A549 (cell line): ENCODE measurements at regions of chr6 and their contacts with region 1.

Region 1: DNA sequence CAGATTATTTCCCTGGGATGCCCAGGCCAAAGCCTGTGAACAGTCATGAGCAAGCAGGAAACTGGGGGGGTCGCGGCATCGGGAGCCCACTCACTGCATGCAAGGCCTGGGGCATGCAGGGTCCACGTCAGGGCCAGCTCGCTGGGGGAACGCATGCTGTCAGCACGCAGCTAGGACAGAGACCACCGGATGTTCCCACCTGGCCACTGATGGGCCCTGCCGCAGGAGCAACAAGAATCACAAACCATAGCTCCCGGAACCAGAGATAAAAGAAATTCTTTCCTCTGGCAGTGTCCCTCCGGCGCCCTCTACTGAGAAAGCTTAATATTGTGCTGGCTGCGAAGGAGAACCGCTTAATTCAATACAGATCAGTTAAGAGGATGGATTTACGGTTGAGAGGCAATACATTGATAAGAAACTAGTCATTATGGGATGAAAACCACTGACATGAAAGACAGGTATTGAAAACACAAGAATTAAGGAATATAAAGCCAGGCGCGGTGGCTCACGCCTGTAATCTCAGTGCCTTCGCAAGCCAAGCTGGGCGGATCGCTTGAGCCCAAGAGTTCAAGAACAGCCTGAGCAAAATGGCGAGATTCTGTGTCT is 32.6 kb downstream of the C6orf15 start:
- DNase-seq: peak; percentile 53 to 55
- ATAC-seq: peak; percentile 81 to 91
- H3K4me3 ChIP-seq: no peak overlapping the region
- H3K27ac ChIP-seq: peak overlapping the region in 1 of 2 experiments; percentile 84; a peak in 3 of 6 replicates
- H3K4me1 ChIP-seq: no peaks in the 10 kb centered on the region
- CTCF ChIP-seq: peak; percentile 72
- EP300 ChIP-seq: no peak
- POLR2A ChIP-seq: no peak
- RAD21 ChIP-seq: peak; percentile 70 to 71

Region 2: GRCh38 chr6:30942338-30943060 is 137.3 kb before region 1 on chr6:
- CTCF ChIA-PET with region 1: interaction called, 13 read pairs
- POLR2A ChIA-PET with region 1: no interaction called
- DNase-seq: peak; percentile 85 to 87
- ATAC-seq: peak; percentile 95 to 97
- H3K4me3 ChIP-seq: peak overlapping the region; percentile 12; the same call in 1 of the 3 replicates
- H3K27ac ChIP-seq: peak overlapping the region; percentile 80 to 84
- H3K4me1 ChIP-seq: peaks cover 14% of the 10 kb centered on the region
- CTCF ChIP-seq: peak; percentile 41
- EP300 ChIP-seq: no peak
- POLR2A ChIP-seq: no peak
- RAD21 ChIP-seq: peak; percentile 56; a peak in 4 of 5 replicates

Region 3: DNA sequence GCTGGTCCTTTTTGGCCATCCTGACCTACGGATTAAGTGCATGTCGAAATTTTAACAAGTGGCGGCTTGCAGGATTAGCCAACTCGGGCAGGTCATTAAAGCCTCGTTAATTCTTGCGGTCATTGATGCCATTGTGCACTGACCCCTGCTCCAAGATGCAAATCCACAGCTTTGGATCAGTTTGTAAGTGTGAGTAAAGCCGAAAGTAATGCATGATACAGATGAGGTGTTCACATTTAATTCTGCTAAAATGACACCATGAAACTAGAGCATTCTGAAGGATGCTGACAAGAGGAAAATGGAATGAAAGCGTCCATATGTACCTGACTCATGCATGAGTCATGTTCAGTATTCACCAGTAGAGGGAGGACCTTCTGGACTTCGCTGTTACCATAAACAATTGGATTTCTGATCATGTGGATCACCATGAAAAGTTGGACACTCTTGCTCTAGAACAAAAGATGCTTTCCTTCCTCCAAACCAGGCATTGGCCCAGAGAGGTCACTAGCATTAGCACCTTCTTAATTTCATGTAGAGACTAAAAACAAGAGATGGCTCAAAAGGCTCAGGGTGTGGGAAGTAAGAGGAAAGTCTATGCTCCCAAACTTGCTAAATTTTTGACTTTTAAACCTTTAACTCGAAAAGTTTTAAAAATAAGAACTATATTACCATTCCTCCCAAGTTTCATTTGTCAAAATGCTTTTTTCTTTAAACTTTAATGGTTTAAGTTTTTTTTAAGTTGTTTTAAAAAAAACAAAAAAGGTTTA is 21.4 kb before region 1 on chr6:
- CTCF ChIA-PET with region 1: interaction called, 14 read pairs
- POLR2A ChIA-PET with region 1: no interaction called
- DNase-seq: peak; percentile 68 to 74
- ATAC-seq: peak; percentile 93
- H3K4me3 ChIP-seq: no peak overlapping the region
- H3K27ac ChIP-seq: peak overlapping the region in 1 of 2 experiments; percentile 49; a peak in 2 of 6 replicates
- H3K4me1 ChIP-seq: peaks cover 15% of the 10 kb centered on the region
- CTCF ChIP-seq: peak; percentile 37
- EP300 ChIP-seq: no peak
- POLR2A ChIP-seq: no peak
- RAD21 ChIP-seq: no peak

Region 4: GRCh38 chr6:31094389-31094881 is 14.7 kb after region 1 on chr6:
- CTCF ChIA-PET with region 1: interaction called, 19 read pairs
- POLR2A ChIA-PET with region 1: no interaction called
- DNase-seq: no peak
- ATAC-seq: peak in 1 of 2 experiments; percentile 52; a peak in 4 of 6 replicates
- H3K4me3 ChIP-seq: no peak overlapping the region
- H3K27ac ChIP-seq: 0 out of 6 replicates have a peak overlapping the region, but pooled peaks of 1 of the 2 experiments have one; percentile 43
- H3K4me1 ChIP-seq: peaks cover 16% of the 10 kb centered on the region
- CTCF ChIP-seq: no peak
- EP300 ChIP-seq: no peak
- POLR2A ChIP-seq: no peak
- RAD21 ChIP-seq: no peak

Region 5: DNA sequence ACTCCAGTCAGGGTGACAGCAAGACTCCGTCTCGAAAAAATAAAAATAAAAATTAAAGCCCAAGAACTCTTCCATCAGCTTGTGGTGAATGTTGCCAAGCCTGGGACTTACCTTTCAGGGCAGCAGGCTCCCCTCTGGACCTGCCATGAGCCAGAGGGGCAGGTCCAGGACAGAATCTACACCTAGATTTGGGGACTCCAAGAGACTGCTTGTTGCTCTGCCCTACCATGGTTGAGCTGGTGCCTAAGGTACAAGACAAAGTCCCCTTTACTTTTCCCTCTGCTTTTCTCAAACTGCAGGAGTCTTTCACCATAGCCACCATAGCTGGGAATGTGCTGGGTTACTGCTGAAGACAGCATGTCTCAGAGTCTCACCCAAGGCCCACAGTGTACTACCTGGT is 23.4 kb after region 1 on chr6:
- CTCF ChIA-PET with region 1: interaction called, 13 read pairs
- POLR2A ChIA-PET with region 1: no interaction called
- DNase-seq: no peak
- ATAC-seq: no peak
- H3K4me3 ChIP-seq: no peak overlapping the region
- H3K27ac ChIP-seq: no peak overlapping the region
- H3K4me1 ChIP-seq: no peaks in the 10 kb centered on the region
- CTCF ChIP-seq: no peak
- EP300 ChIP-seq: no peak
- POLR2A ChIP-seq: no peak
- RAD21 ChIP-seq: no peak

Region 6: DNA sequence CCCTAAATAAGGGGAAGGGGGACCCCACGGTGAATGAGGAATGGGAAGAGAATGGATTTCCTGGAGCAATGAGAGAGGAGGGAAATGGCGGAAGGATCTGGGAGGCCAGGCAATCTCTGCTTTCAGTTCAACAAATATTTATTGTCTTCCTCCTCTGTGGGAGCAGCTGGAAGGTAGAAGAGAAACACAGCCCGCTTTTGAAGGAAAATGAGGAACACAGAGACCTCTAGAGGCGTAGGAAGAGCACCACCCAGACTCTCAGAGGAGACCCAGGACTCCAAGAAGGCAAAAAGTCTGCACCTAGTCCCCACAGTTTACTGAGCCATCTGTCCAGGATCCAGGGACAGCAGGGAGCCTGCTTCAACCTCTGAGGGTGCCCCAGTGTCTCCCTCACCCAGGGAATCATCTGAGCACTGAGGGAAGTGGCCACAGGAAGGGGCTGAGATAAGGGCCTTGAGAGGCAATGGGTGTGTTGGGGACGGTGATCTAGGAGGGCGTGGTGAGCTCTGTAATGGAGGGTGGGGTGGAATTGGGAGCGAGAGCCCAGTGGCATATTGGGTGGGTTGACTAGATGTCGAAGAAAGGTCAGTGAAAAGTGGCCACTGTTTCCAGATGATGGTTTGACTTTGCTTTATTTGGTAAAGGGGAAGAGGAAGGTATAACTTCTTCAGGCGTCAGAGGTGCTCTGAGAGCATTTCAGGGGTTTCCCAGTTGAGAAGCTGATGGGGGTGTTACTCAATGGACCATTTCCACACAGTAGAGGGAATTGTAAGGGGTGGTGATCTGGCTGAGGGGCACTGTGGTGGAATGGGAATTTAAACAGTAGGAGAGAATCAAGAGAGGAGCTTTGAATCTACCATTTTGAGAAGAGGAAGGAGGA is 35.5 kb after region 1 on chr6:
- CTCF ChIA-PET with region 1: interaction called, 31 read pairs
- POLR2A ChIA-PET with region 1: interaction called, 5 read pairs
- DNase-seq: peak; percentile 50 to 79
- ATAC-seq: peak; percentile 87 to 92
- H3K4me3 ChIP-seq: peak overlapping the region; percentile 40
- H3K27ac ChIP-seq: peak overlapping the region; percentile 92 to 93
- H3K4me1 ChIP-seq: peaks cover 16% of the 10 kb centered on the region
- CTCF ChIP-seq: peak; percentile 46
- EP300 ChIP-seq: no peak
- POLR2A ChIP-seq: no peak
- RAD21 ChIP-seq: peak; percentile 53 to 61; a peak in 4 of 5 replicates